ENCODE measurements at regions of chr5 and their contacts with region 1.

Region 1: DNA sequence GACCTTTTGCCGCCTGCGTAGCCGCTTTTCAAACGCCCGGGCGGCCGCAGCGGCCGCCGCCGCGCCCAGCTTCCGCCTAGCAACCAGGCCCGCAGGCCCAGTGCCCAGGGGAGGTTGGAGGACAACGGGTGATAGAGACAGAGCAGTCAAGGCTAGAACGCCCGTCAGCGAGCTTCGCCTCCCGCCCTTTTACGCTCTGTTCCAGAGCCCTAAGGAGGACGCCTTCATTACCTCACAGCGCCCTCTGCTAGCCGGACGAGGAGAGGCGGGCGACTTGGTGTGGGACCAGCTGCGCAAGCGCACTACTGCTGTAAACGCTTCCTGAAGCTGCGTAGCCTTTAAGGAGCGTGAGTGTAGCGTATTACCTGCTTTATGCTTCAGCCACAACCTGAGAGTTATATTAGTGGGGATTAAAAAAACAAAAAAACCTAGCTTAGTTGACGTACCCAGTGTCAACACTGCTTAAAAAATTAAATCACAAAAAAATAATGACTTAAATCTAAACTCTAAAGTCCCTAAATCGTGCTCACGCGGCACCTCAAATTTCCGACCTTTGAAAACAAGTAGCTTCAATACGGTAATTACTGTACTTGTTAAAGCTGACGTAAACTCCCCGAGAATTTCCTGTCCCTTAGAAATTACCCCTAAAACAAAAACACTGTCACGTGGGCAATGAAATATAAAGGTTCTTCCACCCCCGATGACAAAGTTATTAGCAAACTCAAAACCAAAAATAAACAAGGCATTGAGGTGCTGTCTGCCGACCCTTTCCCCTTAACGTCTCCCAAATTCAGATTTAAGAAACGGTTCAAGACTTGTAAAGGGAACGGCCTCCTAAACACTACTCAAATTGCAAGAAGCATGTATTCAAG is at the start of gene CEP120:
- DNase-seq: peak; percentile 90
- ATAC-seq: peak; percentile 97
- H3K4me3 Mint-ChIP-seq: no peak within 1 kb of the TSS
- H3K27ac Mint-ChIP-seq: peak within 1 kb of the TSS; percentile 94
- H3K4me1 Mint-ChIP-seq: peaks cover 16% of the 10 kb centered on the region
- H3K27me3 Mint-ChIP-seq: no peaks in the 10 kb centered on the region
- total RNA-seq, gene CEP120: 41.7 to 42.8 TPM

Region 2: GRCh38 chr5:123511648-123512605 is 88.4 kb after region 1 on chr5 and contains the start of gene CSNK1G3:
- POLR2A ChIA-PET with region 1: interaction called, 67 read pairs
- DNase-seq: peak; percentile 86
- ATAC-seq: peak; percentile 93
- H3K4me3 Mint-ChIP-seq: peak within 1 kb of the TSS; percentile 92
- H3K27ac Mint-ChIP-seq: peak within 1 kb of the TSS; percentile 91
- H3K4me1 Mint-ChIP-seq: peaks cover 36% of the 10 kb centered on the region
- H3K27me3 Mint-ChIP-seq: peaks cover 3% of the 10 kb centered on the region
- total RNA-seq, gene CSNK1G3: 53.4 to 60.3 TPM

Region 3: DNA sequence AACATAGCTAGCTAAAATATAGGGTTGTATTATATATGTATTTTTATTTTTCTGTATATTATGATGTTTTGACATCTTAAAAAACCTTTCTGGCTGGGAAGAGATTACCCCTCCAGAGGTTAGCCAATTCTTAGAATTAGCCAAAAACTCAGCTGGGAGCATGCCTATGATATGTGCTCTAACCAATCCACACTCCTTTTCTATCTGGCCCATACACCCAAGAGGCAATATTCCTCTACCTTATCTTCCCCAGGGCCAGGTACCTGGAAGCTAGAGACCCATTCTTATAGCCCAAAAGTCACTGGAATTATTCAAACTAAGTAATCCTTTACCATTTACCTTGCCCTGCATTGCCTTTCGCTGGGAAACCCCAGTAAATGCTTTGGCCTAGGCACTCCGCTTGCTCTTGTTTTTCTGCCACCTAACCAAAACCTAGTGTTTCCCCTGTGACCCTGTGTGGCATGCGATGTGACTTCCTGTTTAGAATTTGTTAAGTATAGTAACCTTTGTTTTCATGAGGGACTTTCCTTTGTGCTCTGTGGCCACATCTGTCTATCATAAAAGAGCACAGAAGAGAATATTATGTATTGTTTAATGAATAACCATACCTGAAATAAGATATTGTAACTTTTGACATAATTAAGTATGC is 125.9 kb after region 1 on chr5:
- POLR2A ChIA-PET with region 1: interaction called, 10 read pairs
- DNase-seq: peak; percentile 31
- ATAC-seq: peak; percentile 96
- H3K4me3 Mint-ChIP-seq: peak overlapping the region; percentile 43
- H3K27ac Mint-ChIP-seq: peak overlapping the region; percentile 60
- H3K4me1 Mint-ChIP-seq: peaks cover 13% of the 10 kb centered on the region
- H3K27me3 Mint-ChIP-seq: no peaks in the 10 kb centered on the region